Psoas muscle (tissue), 8 donors: ENCODE measurements at regions of chr19 and their contacts with region 1.

Region 1: DNA sequence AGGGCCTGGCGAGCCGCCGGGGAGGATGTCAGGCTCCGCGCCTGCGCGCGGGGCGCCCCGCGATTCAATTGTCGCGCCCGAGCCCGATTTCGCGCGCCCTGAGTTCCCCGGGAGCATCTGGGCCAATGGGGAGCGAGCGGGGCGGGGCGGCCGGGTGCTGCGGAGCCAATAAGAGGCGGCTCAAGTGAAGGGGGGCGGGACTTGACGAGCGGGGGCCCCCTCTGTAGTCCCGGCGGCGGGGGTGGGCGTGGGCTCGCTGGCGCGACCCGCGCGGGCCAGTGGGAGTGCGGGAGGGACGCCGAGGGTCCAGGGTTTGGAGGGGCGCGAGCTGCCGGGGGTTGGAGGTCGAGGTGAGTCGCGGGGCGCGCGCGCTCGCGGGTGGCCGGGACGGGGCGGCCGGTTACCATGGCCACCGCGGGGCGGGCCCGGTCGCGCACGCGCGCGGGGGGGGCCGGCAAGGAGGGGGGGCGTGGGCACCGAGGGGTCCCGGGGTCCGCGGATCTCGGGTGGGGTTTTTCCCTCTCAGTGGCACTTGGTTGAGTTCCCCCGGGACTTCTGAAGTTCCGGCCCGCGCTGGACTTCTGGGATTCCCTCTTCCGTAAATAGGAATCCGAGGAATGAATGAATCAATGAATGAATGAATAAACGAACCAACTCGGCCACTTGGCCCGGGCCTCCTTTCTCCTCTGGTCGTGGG is 744 bp downstream of the UHRF1 start:
- DNase-seq: peak; percentile 93 to 96
- ATAC-seq: peak; percentile 87 to 95 (median 91)
- H3K4me3 ChIP-seq: peak overlapping the region; percentile 79
- H3K27ac ChIP-seq: no peak overlapping the region
- H3K4me1 ChIP-seq: peaks cover 19% of the 10 kb centered on the region
- H3K27me3 ChIP-seq: no peaks in the 10 kb centered on the region
- CTCF ChIP-seq: no peak

Region 2: DNA sequence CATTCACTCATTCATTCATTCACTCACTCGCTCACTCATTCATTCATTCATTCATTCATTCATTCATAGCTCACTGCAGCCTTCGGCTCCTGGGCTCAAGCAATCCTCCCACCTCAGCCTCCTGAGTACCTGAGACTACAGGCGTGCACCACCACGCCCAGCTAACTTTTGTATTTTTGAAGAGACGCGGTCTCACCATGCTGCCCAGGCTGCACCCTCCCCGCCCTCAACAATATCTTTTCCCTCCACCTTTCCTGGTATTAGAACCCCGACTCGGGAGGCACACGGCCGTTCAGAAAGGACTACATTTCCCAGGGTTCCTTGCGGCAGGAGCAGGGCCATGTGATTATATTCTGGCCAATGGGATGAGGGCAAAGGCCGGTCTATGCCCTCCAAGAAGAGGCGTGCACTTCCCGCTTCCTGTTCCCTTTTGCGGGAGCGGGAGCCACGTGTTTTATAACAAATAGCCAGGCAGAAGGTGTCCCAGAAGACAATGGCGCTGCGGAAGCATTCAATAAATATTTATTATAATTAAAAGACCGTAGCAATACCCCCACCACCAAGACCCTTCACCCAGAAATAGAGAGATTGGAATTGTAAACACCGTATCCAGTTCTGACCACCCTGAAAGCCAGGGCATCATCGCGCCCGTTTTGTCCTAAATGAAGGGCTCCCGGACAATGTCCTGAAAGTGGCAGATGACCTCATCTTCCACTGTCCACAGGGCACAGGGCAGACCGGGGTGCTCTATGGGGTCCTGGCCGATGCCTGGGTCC is 94.4 kb before region 1 on chr19:
- intact Hi-C with region 1: loop called in 1 of 2 experiments (anchors 5 kb)
- DNase-seq: peak; percentile 87 to 92
- ATAC-seq: peak; percentile 82 to 88 (median 85)
- H3K4me3 ChIP-seq: peak overlapping the region; percentile 45
- H3K27ac ChIP-seq: peak overlapping the region; percentile 93
- H3K4me1 ChIP-seq: peaks cover 35% of the 10 kb centered on the region
- H3K27me3 ChIP-seq: no peaks in the 10 kb centered on the region
- CTCF ChIP-seq: no peak

Region 3: DNA sequence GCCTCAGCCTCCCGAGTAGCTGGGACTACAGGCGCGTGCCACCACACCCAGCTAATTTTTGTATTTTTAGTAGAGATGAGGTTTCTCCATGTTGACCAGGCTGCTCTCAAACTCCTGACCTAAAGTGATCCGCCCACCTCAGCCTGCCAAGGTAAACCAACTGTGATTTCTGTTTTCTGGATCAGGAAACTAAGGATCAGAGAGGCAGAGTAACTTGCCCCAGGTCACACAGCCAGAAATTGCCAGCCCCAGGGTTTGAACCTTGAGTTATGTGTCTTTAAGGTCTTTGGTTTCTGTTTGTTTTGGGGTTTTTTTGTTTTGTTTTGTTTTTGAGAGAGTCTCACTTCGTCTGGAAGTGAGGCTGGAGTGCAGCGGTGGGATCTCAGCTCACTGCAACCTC is 38.3 kb before region 1 on chr19:
- intact Hi-C with region 1: loop called (anchors 1 kb)
- DNase-seq: no peak
- ATAC-seq: no peak
- H3K4me3 ChIP-seq: no peak overlapping the region
- H3K27ac ChIP-seq: no peak overlapping the region
- H3K4me1 ChIP-seq: peaks cover 6% of the 10 kb centered on the region
- H3K27me3 ChIP-seq: no peaks in the 10 kb centered on the region
- CTCF ChIP-seq: no peak

Region 4: GRCh38 chr19:4877753-4878490 is 32.1 kb before region 1 on chr19:
- intact Hi-C with region 1: loop called in 1 of 2 experiments (anchors 1 kb)
- DNase-seq: peak; percentile 84 to 94
- ATAC-seq: peak; percentile 92 to 94 (median 94)
- H3K4me3 ChIP-seq: peak overlapping the region; percentile 21
- H3K27ac ChIP-seq: peak overlapping the region; percentile 91
- H3K4me1 ChIP-seq: peaks cover 16% of the 10 kb centered on the region
- H3K27me3 ChIP-seq: no peaks in the 10 kb centered on the region
- CTCF ChIP-seq: no peak

Region 5: DNA sequence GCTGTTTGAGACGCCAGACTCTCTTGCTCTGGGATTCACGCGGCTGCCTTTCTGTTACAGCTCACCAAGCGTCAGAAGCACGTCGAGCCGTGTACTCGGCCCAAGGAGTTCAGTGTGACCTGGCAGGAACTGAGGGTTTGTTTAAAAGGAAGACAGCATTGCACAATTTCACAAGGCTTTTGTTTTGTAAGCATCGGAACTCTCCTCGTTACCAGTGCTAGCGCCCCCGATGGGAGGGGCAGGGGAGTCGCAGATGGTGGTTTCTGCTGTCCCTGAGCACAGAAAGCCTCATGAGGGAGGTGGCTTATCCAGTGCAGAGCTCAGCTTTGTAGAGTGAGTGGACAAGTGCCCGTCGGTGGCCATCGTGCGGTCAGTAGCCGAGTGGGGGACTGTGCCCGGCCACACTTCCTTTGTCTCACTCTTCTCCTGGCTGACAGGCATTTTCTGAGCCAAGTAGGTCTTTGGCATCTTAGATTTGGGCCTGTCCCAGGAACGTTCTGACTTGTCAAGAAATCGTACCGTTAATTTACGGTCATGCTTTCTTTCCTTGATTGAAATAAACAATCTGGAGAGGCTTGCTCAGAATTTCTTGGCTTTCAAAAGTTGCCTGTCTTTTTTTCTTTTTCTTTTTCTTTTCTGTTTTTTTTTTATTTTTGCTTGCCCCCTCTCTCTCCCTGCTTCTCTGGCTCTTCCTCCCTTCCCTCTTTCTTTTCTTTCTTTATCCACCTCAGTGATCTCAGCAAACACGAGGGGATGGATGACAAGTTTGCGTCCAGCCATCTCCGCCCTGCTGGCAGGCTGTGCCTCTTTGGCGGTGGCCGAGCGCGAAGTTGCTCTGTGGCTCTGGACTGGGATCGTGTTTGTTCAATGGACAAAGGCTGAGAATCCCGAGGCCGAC is 66.6 kb after region 1 on chr19:
- intact Hi-C with region 1: no loop called
- DNase-seq: peak; percentile 83 to 93
- ATAC-seq: peak; percentile 69 to 78 (median 77)
- H3K4me3 ChIP-seq: peak overlapping the region; percentile 19
- H3K27ac ChIP-seq: peak overlapping the region; percentile 83
- H3K4me1 ChIP-seq: peaks cover 81% of the 10 kb centered on the region
- H3K27me3 ChIP-seq: no peaks in the 10 kb centered on the region
- CTCF ChIP-seq: peak; percentile 19